ENCODE measurements at regions of chr10 and their contacts with region 1.

Region 1: DNA sequence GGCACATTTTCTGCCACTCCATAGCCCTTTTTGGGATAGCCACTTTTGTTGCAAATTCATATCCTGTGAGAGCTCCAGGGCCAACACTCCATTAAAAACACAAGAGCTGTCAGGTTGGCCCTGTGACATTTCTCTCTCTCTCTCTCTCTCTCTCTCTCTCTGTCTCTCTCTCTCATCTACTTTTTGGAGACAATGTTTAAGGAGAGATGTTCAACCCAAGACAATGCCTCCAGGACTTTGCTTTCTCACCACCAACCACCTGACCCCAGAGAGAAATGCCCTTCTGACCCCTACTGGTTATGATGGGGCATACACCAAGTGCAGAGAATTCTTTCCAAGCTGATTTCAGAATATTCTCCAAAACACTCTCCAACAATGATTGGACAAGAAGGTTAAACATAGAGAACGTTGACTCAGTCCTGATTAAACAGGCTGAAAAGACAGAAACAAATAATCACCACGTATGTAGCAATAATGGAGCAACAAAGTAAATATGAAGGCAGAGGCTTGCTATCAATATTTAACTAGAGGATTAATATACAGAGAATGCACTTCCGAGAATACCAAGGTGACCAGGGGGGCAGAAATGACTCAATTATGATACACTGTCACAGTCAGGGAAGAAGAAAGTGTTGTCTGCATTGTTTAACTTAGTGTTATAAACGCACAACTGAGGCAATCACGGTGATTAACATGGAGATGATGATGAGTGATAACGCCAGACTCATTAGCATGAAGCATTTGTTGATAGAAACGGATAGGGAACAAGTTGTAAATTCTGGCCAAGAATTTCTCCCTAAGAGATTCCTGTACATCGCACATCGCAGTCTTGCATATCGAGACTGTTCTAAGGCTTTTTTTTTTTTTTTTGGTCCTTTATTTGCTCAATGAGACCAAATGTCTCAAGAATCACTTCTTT is 178.5 kb downstream of the NRP1 start:
- DNase-seq: peak in 8 of 14 experiments; percentile 17 to 83 (median 50)
- ATAC-seq: peak; percentile 83
- H3K4me3 ChIP-seq: no peak overlapping the region
- H3K4me3 Mint-ChIP-seq: peak overlapping the region; percentile 26
- H3K27ac ChIP-seq: no peak overlapping the region
- H3K27ac Mint-ChIP-seq: peak overlapping the region; percentile 15
- H3K4me1 ChIP-seq: peaks cover 44% of the 10 kb centered on the region
- H3K4me1 Mint-ChIP-seq: peaks cover 48% of the 10 kb centered on the region
- H3K27me3 ChIP-seq: no peaks in the 10 kb centered on the region
- H3K27me3 Mint-ChIP-seq: no peaks in the 10 kb centered on the region
- CTCF ChIP-seq: peak; percentile 64

Region 2: GRCh38 chr10:32445740-32446535 is 710.0 kb before region 1 on chr10 and contains the start of gene CCDC7:
- CTCF ChIA-PET with region 1: interaction called, 3 read pairs
- POLR2A ChIA-PET with region 1: no interaction called
- intact Hi-C with region 1: loop called in 1 of 2 experiments (anchors 10 kb)
- DNase-seq: peak; percentile 74 to 96 (median 82)
- ATAC-seq: peak; percentile 95
- H3K4me3 ChIP-seq: peak within 1 kb of the TSS; percentile 96
- H3K4me3 Mint-ChIP-seq: peak within 1 kb of the TSS; percentile 94
- H3K27ac ChIP-seq: peak within 1 kb of the TSS; percentile 92 to 95
- H3K27ac Mint-ChIP-seq: peak within 1 kb of the TSS; percentile 97
- H3K4me1 ChIP-seq: peaks cover 8% of the 10 kb centered on the region
- H3K4me1 Mint-ChIP-seq: peaks cover 33% of the 10 kb centered on the region
- H3K27me3 ChIP-seq: no peaks in the 10 kb centered on the region
- H3K27me3 Mint-ChIP-seq: no peaks in the 10 kb centered on the region
- CTCF ChIP-seq: peak; percentile 64
- total RNA-seq, gene CCDC7: 69.4 to 72.9 TPM

Region 3: DNA sequence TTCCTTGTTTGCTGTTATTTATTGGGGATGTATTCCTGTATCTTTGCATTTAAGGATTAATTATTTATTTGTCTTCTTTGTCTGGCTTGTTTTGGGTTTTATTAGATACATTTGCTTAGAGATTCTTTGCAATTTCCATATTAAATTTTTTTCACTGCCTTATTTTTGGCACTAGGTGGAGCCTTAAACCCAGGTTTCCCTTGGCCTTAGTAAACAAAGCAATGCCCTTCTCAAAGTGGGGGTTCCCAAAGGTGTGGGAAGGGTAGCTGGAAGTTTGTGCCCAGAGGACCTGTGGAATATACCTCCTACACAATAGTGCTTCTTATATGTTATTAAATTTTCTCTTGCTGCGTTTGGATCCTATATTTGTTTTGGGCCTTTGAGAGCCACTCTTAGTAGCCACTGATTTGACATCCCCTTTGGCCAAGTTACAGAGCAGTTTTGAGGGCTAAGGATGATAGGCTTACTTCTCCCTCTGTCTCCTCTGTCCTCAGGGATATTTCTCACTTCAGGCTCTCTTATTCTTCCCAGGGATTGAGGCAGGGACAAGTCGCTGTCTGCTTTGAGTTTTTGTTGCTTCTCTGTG is 360.3 kb before region 1 on chr10:
- CTCF ChIA-PET with region 1: no interaction called
- POLR2A ChIA-PET with region 1: no interaction called
- intact Hi-C with region 1: loop called (anchors 1 kb)
- DNase-seq: peak in 4 of 14 experiments; percentile 23 to 66 (median 58)
- ATAC-seq: peak; percentile 46
- H3K4me3 ChIP-seq: no peak overlapping the region
- H3K4me3 Mint-ChIP-seq: no peak overlapping the region
- H3K27ac ChIP-seq: no peak overlapping the region
- H3K27ac Mint-ChIP-seq: no peak overlapping the region
- H3K4me1 ChIP-seq: no peaks in the 10 kb centered on the region
- H3K4me1 Mint-ChIP-seq: no peaks in the 10 kb centered on the region
- H3K27me3 ChIP-seq: no peaks in the 10 kb centered on the region
- H3K27me3 Mint-ChIP-seq: no peaks in the 10 kb centered on the region
- CTCF ChIP-seq: peak; percentile 83

Region 4: DNA sequence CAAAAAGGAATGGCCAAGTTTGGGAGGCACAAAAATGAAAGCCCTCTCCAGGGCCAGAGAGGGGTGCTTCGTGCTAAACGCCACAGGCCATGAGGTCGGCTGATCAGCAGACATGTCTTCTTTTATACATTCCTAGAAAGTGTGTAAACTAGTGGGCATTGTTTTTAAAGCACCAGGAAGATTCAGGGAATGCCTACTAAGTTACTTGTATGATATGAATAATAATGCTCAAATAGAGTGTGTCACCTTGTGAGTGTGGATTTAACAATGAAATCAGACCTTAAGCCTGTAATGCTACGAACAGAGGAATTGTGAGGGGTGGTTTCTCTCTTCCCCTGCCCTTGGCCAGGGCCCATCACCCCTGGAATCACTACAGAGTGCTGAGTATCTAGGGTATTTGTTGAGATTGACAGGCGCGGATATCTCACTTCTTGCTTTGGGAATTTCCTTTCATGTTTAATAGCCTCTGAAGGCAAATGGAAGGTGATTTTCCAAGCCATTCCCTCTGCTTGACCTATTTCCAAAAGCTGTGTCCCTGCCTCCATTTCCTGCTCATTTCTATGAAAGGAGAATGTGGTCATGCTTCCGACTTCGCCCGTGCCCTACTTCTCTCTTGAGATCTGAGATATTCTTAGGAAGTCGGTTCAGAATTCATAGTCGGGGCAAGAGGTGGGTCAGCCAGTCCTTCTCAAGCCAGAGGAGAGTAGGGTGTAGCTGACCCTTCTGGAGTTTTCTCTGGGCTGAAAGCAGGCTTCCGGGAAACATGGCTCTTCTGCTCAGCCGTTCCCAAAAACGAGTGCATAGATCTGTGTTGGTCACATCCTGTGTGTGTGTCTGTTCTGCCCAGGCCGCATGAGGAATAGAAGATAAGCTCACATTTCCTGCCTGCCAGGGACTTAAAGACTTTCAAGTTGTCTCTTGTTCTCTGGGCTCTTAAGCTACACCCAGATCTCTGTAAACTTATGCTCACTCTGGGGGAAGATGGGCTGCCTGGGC is 30.2 kb before region 1 on chr10:
- CTCF ChIA-PET with region 1: interaction called, 10 read pairs
- POLR2A ChIA-PET with region 1: interaction called, 18 read pairs
- intact Hi-C with region 1: no loop called
- DNase-seq: peak in 9 of 14 experiments; percentile 26 to 86 (median 49)
- ATAC-seq: peak; percentile 89
- H3K4me3 ChIP-seq: no peak overlapping the region
- H3K4me3 Mint-ChIP-seq: peak overlapping the region; percentile 65
- H3K27ac ChIP-seq: peak overlapping the region; percentile 63 to 83
- H3K27ac Mint-ChIP-seq: peak overlapping the region; percentile 96
- H3K4me1 ChIP-seq: peaks cover 87% of the 10 kb centered on the region
- H3K4me1 Mint-ChIP-seq: peaks cover 90% of the 10 kb centered on the region
- H3K27me3 ChIP-seq: no peaks in the 10 kb centered on the region
- H3K27me3 Mint-ChIP-seq: no peaks in the 10 kb centered on the region
- CTCF ChIP-seq: no peak

Region 5: DNA sequence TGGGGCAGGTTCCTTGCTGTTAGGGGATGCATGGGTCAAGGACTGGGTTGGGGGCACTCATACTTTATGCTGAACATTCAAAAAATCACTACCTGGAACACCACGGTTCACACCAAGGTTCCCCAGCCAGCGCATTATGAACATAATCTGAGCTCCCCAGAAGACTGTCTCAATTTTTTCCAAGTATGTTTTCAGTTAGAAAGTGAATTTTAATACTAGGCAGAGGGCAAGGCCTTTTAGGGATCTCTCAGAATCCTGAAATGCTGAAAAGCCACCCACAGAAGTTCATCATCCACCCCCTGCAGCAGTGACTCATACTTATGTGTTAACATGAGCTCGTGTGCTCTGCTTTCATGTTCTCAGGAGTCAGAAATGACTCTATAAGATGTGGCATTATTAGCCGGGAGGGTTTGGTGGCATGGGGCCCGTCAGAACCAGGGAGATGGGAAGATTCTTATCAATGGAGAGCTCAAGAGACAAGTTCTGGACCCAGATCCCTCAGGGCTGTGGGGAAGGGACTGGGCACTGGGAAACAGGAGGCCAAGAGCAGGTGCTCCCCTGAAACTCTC is 12.7 kb before region 1 on chr10:
- CTCF ChIA-PET with region 1: interaction called, 12 read pairs
- POLR2A ChIA-PET with region 1: interaction called, 30 read pairs
- intact Hi-C with region 1: loop called in 1 of 2 experiments (anchors 2 kb)
- DNase-seq: peak in 8 of 14 experiments; percentile 20 to 70 (median 30)
- ATAC-seq: peak; percentile 14
- H3K4me3 ChIP-seq: no peak overlapping the region
- H3K4me3 Mint-ChIP-seq: no peak overlapping the region
- H3K27ac ChIP-seq: no peak overlapping the region
- H3K27ac Mint-ChIP-seq: peak overlapping the region; percentile 52
- H3K4me1 ChIP-seq: peaks cover 70% of the 10 kb centered on the region
- H3K4me1 Mint-ChIP-seq: peaks cover 52% of the 10 kb centered on the region
- H3K27me3 ChIP-seq: no peaks in the 10 kb centered on the region
- H3K27me3 Mint-ChIP-seq: no peaks in the 10 kb centered on the region
- CTCF ChIP-seq: no peak